Transverse colon (tissue), 4 donors: ENCODE measurements at regions of chr4 and their contacts with region 1.

Region 1: DNA sequence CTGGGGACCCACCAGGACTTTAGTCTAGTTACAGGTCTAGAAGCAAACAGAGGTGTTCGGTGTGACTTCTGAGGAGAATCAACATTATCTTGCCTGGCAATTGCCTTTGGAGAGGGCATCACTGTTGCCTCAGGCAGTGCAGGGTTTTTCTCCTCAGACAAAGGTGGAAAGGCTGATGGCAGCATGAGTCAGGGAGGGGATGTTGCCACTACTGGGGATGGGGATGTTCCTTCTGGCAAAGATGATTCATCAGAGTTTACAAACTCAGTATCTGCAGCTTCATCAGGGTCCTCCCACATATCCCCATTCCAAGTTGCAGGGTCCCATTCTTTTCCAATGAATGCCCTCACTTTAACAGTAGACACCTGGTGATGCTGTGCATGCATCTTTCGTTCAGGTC is 91.3 kb upstream of the GALNTL6 start:
- DNase-seq: no peak
- H3K4me3 ChIP-seq: no peak overlapping the region
- H3K27ac ChIP-seq: no peak overlapping the region
- H3K4me1 ChIP-seq: no peaks in the 10 kb centered on the region
- H3K27me3 ChIP-seq: no peaks in the 10 kb centered on the region
- CTCF ChIP-seq: no peak
- EP300 ChIP-seq: no peak
- POLR2A ChIP-seq: no peak

Region 2: GRCh38 chr4:171742436-171742835 is 20.5 kb after region 1 on chr4:
- in situ Hi-C with region 1: no loop called
- intact Hi-C with region 1: loop called (anchors 2 kb)
- DNase-seq: no peak
- H3K4me3 ChIP-seq: no peak overlapping the region
- H3K27ac ChIP-seq: no peak overlapping the region
- H3K4me1 ChIP-seq: no peaks in the 10 kb centered on the region
- H3K27me3 ChIP-seq: no peaks in the 10 kb centered on the region
- CTCF ChIP-seq: no peak
- EP300 ChIP-seq: no peak
- POLR2A ChIP-seq: no peak